Caco-2 (cell line): ENCODE measurements at regions of chr10 and their contacts with region 1.

Region 1: GRCh38 chr10:57338823-57339558 is 928.7 kb downstream of the IPMK start:
- DNase-seq: peak in 1 of 2 experiments; percentile 64
- H3K4me3 ChIP-seq: no peak overlapping the region
- H3K4me3 Mint-ChIP-seq: no peak overlapping the region
- H3K27ac Mint-ChIP-seq: no peak overlapping the region
- H3K4me1 ChIP-seq: no peaks in the 10 kb centered on the region
- H3K4me1 Mint-ChIP-seq: no peaks in the 10 kb centered on the region
- H3K27me3 ChIP-seq: no peaks in the 10 kb centered on the region
- H3K27me3 Mint-ChIP-seq: no peaks in the 10 kb centered on the region
- CTCF ChIP-seq: peak; percentile 83 to 95

Region 2: GRCh38 chr10:57579926-57580325 is 240.9 kb after region 1 on chr10:
- CTCF ChIA-PET with region 1: no interaction called
- POLR2A ChIA-PET with region 1: no interaction called
- intact Hi-C with region 1: loop called (anchors 1 kb)
- DNase-seq: peak in 1 of 2 experiments; percentile 65
- H3K4me3 ChIP-seq: no peak overlapping the region
- H3K4me3 Mint-ChIP-seq: no peak overlapping the region
- H3K27ac Mint-ChIP-seq: no peak overlapping the region
- H3K4me1 ChIP-seq: no peaks in the 10 kb centered on the region
- H3K4me1 Mint-ChIP-seq: no peaks in the 10 kb centered on the region
- H3K27me3 ChIP-seq: no peaks in the 10 kb centered on the region
- H3K27me3 Mint-ChIP-seq: no peaks in the 10 kb centered on the region
- CTCF ChIP-seq: peak; percentile 48 to 61

Region 3: DNA sequence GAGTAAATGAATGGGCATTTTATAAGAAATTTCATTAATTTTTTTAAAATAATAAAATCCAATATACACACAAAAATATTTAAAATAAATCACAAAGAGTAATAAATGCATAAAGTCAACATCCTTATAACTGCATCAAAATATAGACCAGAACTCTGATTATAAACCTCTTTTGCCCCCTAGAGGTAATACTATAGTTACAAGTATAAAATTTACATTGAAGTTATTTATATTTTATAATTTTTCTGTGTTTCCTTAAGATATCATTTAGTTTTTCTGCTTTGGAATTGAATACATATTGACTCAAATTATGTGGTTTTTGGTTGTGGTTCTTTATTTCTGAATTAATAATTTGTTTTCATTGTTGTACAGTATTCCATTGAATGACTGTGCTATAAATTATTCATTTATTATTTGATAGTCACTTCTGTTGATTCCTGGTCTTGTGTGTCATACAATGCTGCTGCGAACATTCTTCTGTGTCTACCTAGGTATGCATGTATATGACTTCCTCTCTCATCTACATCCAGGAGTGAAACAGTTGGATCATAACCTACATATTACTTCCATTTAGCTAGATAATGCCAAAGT is 255.1 kb after region 1 on chr10:
- CTCF ChIA-PET with region 1: no interaction called
- POLR2A ChIA-PET with region 1: no interaction called
- intact Hi-C with region 1: loop called (anchors 1 kb)
- DNase-seq: no peak
- H3K4me3 ChIP-seq: no peak overlapping the region
- H3K4me3 Mint-ChIP-seq: no peak overlapping the region
- H3K27ac Mint-ChIP-seq: no peak overlapping the region
- H3K4me1 ChIP-seq: no peaks in the 10 kb centered on the region
- H3K4me1 Mint-ChIP-seq: no peaks in the 10 kb centered on the region
- H3K27me3 ChIP-seq: no peaks in the 10 kb centered on the region
- H3K27me3 Mint-ChIP-seq: peaks cover 4% of the 10 kb centered on the region
- CTCF ChIP-seq: peak; percentile 13 to 49